MCF 10A (cell line): ENCODE measurements at regions of chr4 and their contacts with region 1.

Region 1: DNA sequence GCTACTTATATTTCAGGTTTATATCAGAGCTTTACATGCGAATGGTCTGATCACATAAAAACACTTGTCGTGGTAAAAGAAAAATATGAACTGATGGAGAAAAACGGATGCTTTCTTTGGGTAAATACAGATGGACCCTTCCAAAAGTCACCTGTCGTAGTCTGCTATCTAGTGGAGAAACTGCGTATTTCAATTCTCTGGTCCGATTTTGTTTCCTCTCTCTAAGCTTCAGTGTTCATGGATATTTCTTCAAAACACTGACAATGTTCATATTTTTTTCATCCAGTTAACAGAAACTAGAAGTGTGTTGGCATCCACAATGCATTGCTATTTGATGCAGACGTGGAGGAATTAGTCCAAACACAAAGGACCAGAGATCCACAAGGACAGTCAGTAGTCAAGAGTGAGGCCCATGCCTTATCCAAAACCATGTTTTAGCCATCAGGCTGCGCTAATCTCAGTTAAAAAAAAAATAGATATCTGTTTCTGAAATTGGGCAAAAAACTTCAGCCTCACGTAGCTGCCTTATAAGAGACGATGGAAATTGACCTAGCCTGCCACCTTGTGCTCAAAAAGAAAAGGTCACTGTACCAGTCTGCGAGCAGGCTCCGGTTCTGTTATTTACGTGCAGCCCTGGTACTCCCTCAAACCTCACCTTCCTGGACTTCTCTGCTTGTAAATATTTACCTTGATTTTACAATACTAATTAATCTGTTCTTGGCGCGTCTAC is 16.0 kb downstream of the MEPE start:
- DNase-seq: peak; percentile 72
- H3K4me3 Mint-ChIP-seq: peak overlapping the region; percentile 20
- H3K27ac Mint-ChIP-seq: no peak overlapping the region
- H3K4me1 Mint-ChIP-seq: peaks cover 25% of the 10 kb centered on the region
- H3K27me3 Mint-ChIP-seq: no peaks in the 10 kb centered on the region
- CTCF ChIP-seq: peak; percentile 39

Region 2: DNA sequence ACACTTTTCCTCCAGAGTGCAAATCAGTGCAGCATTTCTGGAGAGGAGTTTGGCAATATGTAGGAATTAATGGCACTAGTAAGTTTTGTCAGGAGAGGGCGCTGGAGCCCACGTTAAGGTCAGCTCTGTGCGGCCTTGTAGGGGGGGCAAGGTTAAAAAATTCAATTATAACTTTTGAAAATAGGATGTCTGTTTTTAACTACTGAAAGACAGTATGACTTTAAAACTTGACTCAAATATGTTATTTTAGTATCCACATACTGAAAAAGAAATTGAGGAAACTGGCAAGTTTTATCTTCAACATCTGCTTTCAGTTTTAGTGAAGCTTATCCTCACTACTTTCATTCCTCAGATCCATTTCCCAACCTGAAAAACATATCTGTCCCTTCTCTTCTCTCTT is 495.2 kb before region 1 on chr4:
- CTCF ChIA-PET with region 1: interaction called, 4 read pairs
- POLR2A ChIA-PET with region 1: no interaction called
- intact Hi-C with region 1: loop called (anchors 5 kb)
- DNase-seq: peak; percentile 71
- H3K4me3 Mint-ChIP-seq: no peak overlapping the region
- H3K27ac Mint-ChIP-seq: peak overlapping the region; percentile 79
- H3K4me1 Mint-ChIP-seq: peaks cover 18% of the 10 kb centered on the region
- H3K27me3 Mint-ChIP-seq: no peaks in the 10 kb centered on the region
- CTCF ChIP-seq: peak; percentile 77

Region 3: GRCh38 chr4:87543835-87544461 is 304.8 kb before region 1 on chr4:
- CTCF ChIA-PET with region 1: interaction called, 44 read pairs
- POLR2A ChIA-PET with region 1: interaction called, 6 read pairs
- intact Hi-C with region 1: loop called (anchors 1 kb)
- DNase-seq: peak; percentile 74
- H3K4me3 Mint-ChIP-seq: no peak overlapping the region
- H3K27ac Mint-ChIP-seq: no peak overlapping the region
- H3K4me1 Mint-ChIP-seq: no peaks in the 10 kb centered on the region
- H3K27me3 Mint-ChIP-seq: no peaks in the 10 kb centered on the region
- CTCF ChIP-seq: peak; percentile 53

Region 4: DNA sequence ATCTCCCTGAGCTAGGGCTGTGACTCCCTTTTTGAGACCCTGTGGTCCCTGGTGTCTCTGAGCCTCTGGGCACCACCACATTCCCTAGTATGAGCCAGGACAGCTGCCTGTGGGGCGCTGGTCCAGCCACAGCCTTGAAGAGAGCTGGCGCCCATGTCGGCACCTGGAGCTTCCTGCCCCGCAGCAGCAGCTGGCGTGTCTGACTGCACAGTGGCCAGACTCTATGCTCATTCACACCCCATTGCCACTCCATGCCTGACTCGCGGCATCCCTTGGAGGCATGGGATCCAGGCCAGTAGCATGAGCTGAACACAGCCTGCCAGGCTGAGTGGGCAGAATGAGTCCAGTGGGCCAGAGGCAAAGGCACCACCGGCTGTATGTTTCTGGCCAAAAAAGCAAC is 118.4 kb after region 1 on chr4:
- CTCF ChIA-PET with region 1: interaction called, 75 read pairs
- POLR2A ChIA-PET with region 1: interaction called, 4 read pairs
- intact Hi-C with region 1: no loop called
- DNase-seq: no peak
- H3K4me3 Mint-ChIP-seq: no peak overlapping the region
- H3K27ac Mint-ChIP-seq: no peak overlapping the region
- H3K4me1 Mint-ChIP-seq: no peaks in the 10 kb centered on the region
- H3K27me3 Mint-ChIP-seq: no peaks in the 10 kb centered on the region
- CTCF ChIP-seq: no peak

Region 5: GRCh38 chr4:88033309-88033708 is 184.5 kb after region 1 on chr4:
- CTCF ChIA-PET with region 1: interaction called, 20 read pairs
- POLR2A ChIA-PET with region 1: no interaction called
- intact Hi-C with region 1: no loop called
- DNase-seq: peak; percentile 77
- H3K4me3 Mint-ChIP-seq: no peak overlapping the region
- H3K27ac Mint-ChIP-seq: no peak overlapping the region
- H3K4me1 Mint-ChIP-seq: peaks cover 10% of the 10 kb centered on the region
- H3K27me3 Mint-ChIP-seq: no peaks in the 10 kb centered on the region
- CTCF ChIP-seq: peak; percentile 69

Region 6: DNA sequence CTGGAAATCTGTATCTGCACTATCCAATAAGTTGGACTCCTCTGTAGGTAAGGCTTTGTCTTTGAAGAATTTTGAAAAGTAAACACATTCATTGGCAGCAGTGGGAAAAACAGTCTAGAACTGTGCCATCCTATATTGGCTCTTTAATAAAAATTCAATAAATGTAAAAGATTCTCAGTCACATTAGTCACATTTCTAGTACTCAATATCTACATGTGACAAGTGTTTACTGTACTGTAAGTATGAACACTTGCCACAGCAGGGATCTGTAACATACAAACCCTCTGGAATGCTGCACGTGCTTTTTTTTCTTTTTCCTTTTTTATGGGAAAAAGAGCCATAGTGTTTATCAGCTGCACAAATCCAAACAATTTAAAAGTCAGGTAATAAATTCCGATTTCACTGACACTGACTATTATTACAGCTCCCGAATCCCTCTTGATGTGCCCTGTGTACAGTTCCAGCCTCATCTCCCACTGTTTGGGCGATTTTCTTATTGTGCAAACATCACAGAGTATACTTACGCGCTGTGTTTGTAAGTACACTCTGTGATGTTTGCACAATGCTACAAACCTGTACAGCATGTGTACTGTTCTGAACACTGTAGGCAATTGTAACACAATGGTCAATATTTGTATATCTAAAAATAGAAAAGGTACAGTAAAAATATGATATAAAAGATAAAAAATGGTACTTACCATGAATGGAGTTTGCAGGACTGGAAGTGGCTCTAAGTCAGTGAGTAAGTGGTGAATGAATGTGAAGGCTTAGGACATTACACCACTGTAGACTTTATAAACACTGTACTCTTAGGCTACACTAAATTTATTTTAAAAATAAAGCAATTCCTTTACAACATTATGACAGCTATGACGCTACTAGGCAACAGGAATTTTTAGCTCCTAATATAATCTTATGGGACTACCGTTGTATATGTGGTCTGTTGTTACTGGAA is 666.0 kb after region 1 on chr4:
- CTCF ChIA-PET with region 1: interaction called, 4 read pairs
- POLR2A ChIA-PET with region 1: no interaction called
- intact Hi-C with region 1: loop called (anchors 2 kb)
- DNase-seq: no peak
- H3K4me3 Mint-ChIP-seq: no peak overlapping the region
- H3K27ac Mint-ChIP-seq: no peak overlapping the region
- H3K4me1 Mint-ChIP-seq: no peaks in the 10 kb centered on the region
- H3K27me3 Mint-ChIP-seq: no peaks in the 10 kb centered on the region
- CTCF ChIP-seq: no peak